ENCODE measurements at regions of chr12 and their contacts with region 1.

Region 1: DNA sequence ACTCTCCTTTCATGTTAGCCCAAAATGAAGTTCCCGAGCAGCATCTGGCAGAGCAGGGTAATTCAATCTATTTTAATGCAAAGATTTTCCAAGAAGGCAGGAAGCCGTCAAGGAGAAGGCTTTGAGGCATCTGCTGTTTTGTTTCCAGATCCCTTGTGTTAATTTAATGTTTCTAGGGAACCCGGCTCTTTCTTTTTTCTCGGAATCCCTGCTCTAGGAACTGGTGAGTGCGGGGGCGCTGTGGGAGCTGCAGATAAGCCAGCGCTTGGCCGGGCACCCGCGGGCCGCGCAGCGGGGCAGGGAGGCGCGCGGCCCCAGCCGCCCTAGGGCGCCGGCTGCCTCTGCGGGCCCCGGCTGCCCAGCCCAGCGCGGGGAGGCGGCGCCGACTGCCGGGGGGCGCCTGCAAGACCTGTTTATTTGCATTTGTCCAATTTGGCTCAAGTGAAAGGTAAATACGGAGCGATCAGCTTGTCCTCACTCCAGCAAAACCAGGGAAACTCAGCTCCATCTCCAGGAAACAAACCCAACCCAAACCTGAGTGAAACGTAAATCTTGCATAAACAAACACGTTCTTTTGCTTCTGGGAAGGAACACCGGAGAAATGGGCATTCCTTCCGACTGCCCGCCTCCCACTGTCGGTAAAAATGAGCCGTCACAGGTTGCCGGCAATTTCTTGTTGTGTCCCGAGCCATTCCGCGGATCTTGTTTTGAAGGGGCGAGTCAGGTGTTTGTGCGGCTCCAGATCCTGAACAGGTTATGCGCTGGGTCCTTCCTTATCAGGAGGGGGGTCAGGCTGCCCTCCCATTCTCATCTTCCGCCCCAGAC is 65.1 kb downstream of the CRADD start:
- DNase-seq: peak in 1 of 2 donors; percentile 90
- H3K4me3 ChIP-seq: peak overlapping the region; percentile 61 to 76
- H3K27ac ChIP-seq: peak overlapping the region; percentile 90 to 93
- H3K4me1 ChIP-seq: peaks cover 2 to 18% of the 10 kb centered on the region in 2 donors
- H3K27me3 ChIP-seq: no peaks in the 10 kb centered on the region
- CTCF ChIP-seq: peak; percentile 17 to 62 (median 39)

Region 2: GRCh38 chr12:93591137-93591868 is 151.0 kb before region 1 on chr12:
- intact Hi-C with region 1: loop called (anchors 5 kb)
- DNase-seq: peak; percentile 62 to 91
- H3K4me3 ChIP-seq: peak overlapping the region; percentile 60 to 68
- H3K27ac ChIP-seq: peak overlapping the region; percentile 56 to 62
- H3K4me1 ChIP-seq: peaks cover 0 to 4% of the 10 kb centered on the region in 2 donors
- H3K27me3 ChIP-seq: no peaks in the 10 kb centered on the region
- CTCF ChIP-seq: no peak

Region 3: GRCh38 chr12:93707836-93708235 is 34.5 kb before region 1 on chr12:
- intact Hi-C with region 1: loop called (anchors 5 kb)
- DNase-seq: no peak
- H3K4me3 ChIP-seq: no peak overlapping the region
- H3K27ac ChIP-seq: peak overlapping the region; percentile 69 to 78
- H3K4me1 ChIP-seq: peaks cover 3 to 41% of the 10 kb centered on the region in 2 donors
- H3K27me3 ChIP-seq: no peaks in the 10 kb centered on the region
- CTCF ChIP-seq: no peak

Region 4: GRCh38 chr12:95147866-95148265 is 1405.5 kb after region 1 on chr12:
- intact Hi-C with region 1: no loop called
- DNase-seq: no peak
- H3K4me3 ChIP-seq: no peak overlapping the region
- H3K27ac ChIP-seq: peak overlapping the region in 1 of 2 donors; percentile 50
- H3K4me1 ChIP-seq: peaks cover 0 to 10% of the 10 kb centered on the region in 2 donors
- H3K27me3 ChIP-seq: no peaks in the 10 kb centered on the region
- CTCF ChIP-seq: no peak